Activated CD4-positive, alpha-beta memory T cell treated with anti-CD3 and anti-CD28 coated beads, Interleukin-2, amount 10 ng/mL, durations not matched to agents 7 days and 5 days (primary cell): ENCODE measurements at regions of chr13 and their contacts with region 1.

Region 1: DNA sequence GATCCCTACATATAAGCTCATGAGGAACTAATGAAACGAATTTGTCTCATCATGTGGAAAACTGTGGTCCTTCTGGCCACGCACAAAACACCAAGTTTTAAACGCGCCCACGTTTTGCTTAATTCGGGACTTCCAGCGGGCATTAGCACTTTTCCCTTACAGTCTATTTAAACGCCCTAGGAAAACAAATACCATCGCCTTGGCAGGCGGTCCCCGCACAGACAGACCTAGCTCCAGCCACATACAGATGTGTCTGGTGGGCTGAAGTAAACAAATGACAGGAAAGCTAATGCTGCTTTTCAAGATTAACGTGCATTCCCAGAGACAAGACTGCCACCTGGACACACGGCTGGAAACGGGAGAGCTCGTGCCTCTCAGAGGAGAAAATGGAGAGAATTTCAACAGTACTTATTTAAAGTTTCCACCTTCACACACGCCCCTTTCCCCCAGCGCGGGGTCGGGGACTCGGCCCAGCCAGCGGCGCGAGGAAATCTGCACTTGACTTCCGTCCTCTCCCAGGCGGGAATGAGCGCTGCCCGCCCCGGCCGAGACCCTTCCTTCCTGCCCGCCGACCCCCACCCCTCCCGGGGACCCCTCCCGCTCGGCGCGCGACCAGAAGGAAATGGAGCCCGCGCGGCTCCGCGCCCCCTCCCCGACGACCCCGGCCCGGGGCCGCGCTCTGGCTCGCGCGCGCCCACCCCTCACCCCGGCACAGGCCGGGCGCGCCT is 931 bp downstream of the USP12 start:
- DNase-seq: peak; percentile 39
- H3K4me3 Mint-ChIP-seq: peak overlapping the region; percentile 93
- H3K27ac Mint-ChIP-seq: peak overlapping the region; percentile 93
- H3K4me1 Mint-ChIP-seq: peaks cover 49% of the 10 kb centered on the region
- H3K27me3 Mint-ChIP-seq: no peaks in the 10 kb centered on the region

Region 2: DNA sequence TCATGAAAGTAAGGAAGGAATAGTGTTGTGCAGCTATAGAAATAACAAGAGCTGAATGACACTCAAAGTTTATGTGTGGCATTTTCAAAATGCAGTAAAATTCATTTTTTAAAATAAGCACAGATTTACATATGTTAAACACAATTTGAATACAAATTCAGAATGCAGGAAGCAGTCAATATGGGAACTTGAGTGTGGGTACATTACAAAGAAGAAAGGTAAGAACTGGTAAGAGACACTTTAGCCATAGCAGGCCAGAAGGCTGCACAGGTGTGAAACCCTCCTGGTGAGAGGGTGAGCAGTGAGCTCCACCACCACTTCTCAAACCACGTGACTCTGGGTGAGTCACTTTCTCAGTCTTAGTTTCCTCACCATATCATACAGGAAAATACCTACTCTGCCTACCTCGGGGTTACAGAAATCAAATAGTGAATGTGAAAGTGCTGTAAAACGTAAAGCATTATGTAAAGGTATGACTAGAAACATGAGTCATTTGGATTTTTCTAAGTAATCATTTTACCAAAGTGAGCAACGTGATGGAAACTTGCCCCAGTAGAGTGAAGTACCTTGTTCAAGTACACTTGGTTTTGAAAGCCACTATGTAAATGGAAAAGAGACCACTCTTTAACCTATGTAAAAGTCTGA is 39.6 kb before region 1 on chr13:
- CTCF ChIA-PET with region 1: interaction called, 8 read pairs
- POLR2A ChIA-PET with region 1: interaction called, 24 read pairs
- DNase-seq: peak; percentile 81
- H3K4me3 Mint-ChIP-seq: peak overlapping the region; percentile 11
- H3K27ac Mint-ChIP-seq: peak overlapping the region; percentile 63
- H3K4me1 Mint-ChIP-seq: peaks cover 79% of the 10 kb centered on the region
- H3K27me3 Mint-ChIP-seq: no peaks in the 10 kb centered on the region